ENCODE measurements at regions of chr15 and their contacts with region 1.

Region 1: GRCh38 chr15:59292442-59293151 is 80.1 kb downstream of the MYO1E start:
- DNase-seq: no peak
- ATAC-seq: peak; percentile 33
- H3K4me3 ChIP-seq: peak overlapping the region; percentile 33; the same call in 1 of the 2 replicates
- H3K27ac ChIP-seq: no peak overlapping the region
- H3K4me1 ChIP-seq: peaks cover 57% of the 10 kb centered on the region
- H3K27me3 ChIP-seq: no peaks in the 10 kb centered on the region
- CTCF ChIP-seq: no peak
- EP300 ChIP-seq: no peak
- POLR2A ChIP-seq: no peak
- RAD21 ChIP-seq: no peak

Region 2: DNA sequence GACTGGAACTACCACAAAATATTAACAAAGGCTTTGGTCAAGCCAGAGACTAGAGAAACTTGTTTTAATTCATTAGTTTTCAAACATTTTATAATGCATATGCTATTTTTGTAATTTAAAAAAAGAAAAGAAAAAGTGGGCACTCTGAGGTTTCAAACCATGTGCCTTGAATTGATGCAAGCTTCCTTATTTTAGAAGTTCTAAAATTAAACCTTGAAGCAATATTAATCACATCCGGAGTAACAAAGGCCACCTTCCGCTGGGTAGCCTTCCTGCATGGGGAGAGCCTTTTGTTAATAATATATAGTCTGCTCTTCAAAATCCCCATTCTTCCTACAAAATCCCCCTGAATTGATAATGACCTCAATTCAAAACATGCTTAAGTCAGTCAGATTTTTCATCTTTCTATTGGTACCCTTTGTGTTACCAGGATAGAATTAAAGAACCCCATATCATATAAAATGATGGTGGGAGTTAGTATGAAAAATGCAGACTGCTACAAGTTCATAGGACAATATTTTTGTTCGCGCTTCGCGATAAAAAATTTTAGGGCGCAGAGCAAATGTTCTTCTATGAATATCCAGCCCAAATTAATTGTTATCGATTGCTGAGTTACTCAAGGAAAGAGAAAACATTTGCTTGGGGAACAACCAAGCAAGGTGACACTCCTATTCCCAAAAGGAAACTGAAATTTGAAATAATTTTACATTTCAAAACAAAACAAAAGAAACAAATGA is 55.3 kb before region 1 on chr15:
- CTCF ChIA-PET with region 1: no interaction called
- POLR2A ChIA-PET with region 1: no interaction called
- RAD21 ChIA-PET with region 1: interaction called, 4 read pairs
- SMC1A ChIA-PET with region 1: interaction called, 5 read pairs
- in situ Hi-C with region 1: no loop called
- intact Hi-C with region 1: loop called (anchors 2 kb)
- DNase-seq: peak; percentile 70
- ATAC-seq: peak; percentile 89
- H3K4me3 ChIP-seq: peak overlapping the region; percentile 35
- H3K27ac ChIP-seq: peak overlapping the region; percentile 78
- H3K4me1 ChIP-seq: peaks cover 11% of the 10 kb centered on the region
- H3K27me3 ChIP-seq: no peaks in the 10 kb centered on the region
- CTCF ChIP-seq: no peak
- EP300 ChIP-seq: peak; percentile 52 to 87; a peak in 2 of 4 replicates
- POLR2A ChIP-seq: no peak
- RAD21 ChIP-seq: no peak

Region 3: GRCh38 chr15:59424616-59425015 is 132.0 kb after region 1 on chr15:
- CTCF ChIA-PET with region 1: no interaction called
- POLR2A ChIA-PET with region 1: no interaction called
- RAD21 ChIA-PET with region 1: no interaction called
- SMC1A ChIA-PET with region 1: no interaction called
- in situ Hi-C with region 1: no loop called
- intact Hi-C with region 1: no loop called
- DNase-seq: no peak
- ATAC-seq: 0 out of 3 replicates have a peak, but pooled peaks have one; percentile 19
- H3K4me3 ChIP-seq: no peak overlapping the region
- H3K27ac ChIP-seq: no peak overlapping the region
- H3K4me1 ChIP-seq: peaks cover 7% of the 10 kb centered on the region; the same call in 1 of the 2 replicates
- H3K27me3 ChIP-seq: no peaks in the 10 kb centered on the region
- CTCF ChIP-seq: no peak
- EP300 ChIP-seq: no peak
- POLR2A ChIP-seq: no peak
- RAD21 ChIP-seq: no peak

Measured in GM12878 (cell line).